Pancreas (tissue), 10 donors: ENCODE measurements at regions of chr19 and their contacts with region 1.

Region 1: DNA sequence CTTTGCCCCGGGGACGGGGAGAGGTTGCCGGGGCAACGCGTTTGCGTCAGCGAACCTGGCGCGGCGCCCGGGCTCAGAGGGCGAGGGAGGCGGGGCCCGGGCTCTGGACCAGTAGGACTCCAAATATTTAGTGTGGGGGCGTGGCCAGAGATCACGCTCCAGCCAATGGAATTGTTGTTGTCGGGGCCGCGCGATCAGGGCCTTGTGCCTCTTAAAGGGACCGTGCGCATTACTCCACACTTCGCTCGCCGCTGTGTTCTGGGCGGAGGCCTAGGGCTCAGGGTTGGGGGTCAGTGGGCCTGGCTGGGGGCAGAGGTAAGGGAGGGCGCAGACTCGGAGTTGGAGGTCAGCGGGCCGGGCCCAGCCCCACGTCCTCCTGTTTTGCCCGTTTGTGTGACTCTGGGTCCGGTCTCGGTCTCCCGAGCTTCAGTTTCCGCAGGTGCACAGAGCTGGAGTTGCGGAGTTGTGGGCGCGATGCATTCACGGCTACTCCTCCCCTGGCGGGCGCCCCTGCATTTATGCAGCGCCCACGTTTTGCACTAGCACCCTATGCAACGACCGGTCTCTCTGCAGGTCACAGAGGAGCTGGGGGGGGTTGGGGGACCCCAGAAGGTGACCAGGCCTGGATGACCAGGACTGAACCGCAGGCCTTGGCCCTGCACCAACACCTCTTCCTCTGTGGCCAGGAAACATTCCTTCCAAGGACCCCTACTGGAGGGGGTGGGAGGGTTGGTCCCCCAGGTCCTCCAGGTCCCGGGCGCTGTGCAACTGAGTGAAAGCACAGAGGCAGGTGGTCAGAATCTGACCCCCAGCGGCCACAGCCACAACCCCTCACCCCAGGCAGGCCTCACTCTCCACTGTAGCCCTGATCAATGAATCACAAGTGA is 10.7 kb upstream of the MKNK2 start:
- DNase-seq: peak; percentile 99 to 100 (median 100)
- ATAC-seq: peak; percentile 86 to 90 (median 88)
- H3K4me3 ChIP-seq: peak overlapping the region; percentile 53 to 79 (median 68)
- H3K27ac ChIP-seq: peak overlapping the region; percentile 99 to 100 (median 100)
- H3K4me1 ChIP-seq: peaks cover 22 to 29% (median 27%) of the 10 kb centered on the region in 3 donors
- H3K27me3 ChIP-seq: no peaks in the 10 kb centered on the region
- CTCF ChIP-seq: no peak

Region 2: GRCh38 chr19:1935484-1936208 is 126.1 kb before region 1 on chr19:
- intact Hi-C with region 1: loop called in 1 of 3 experiments (anchors 10 kb)
- DNase-seq: no peak
- ATAC-seq: peak in 2 of 4 donors; percentile 8 to 11
- H3K4me3 ChIP-seq: no peak overlapping the region
- H3K27ac ChIP-seq: no peak overlapping the region
- H3K4me1 ChIP-seq: peaks cover 0 to 5% (median 0%) of the 10 kb centered on the region in 3 donors
- H3K27me3 ChIP-seq: no peaks in the 10 kb centered on the region
- CTCF ChIP-seq: no peak

Region 3: GRCh38 chr19:2021453-2022140 is 40.1 kb before region 1 on chr19:
- intact Hi-C with region 1: loop called in 1 of 3 experiments (anchors 5 kb)
- DNase-seq: no peak
- ATAC-seq: no peak
- H3K4me3 ChIP-seq: no peak overlapping the region
- H3K27ac ChIP-seq: no peak overlapping the region
- H3K4me1 ChIP-seq: no peaks in the 10 kb centered on the region
- H3K27me3 ChIP-seq: no peaks in the 10 kb centered on the region
- CTCF ChIP-seq: no peak